ENCODE measurements at regions of chr3 and their contacts with region 1.

Region 1: DNA sequence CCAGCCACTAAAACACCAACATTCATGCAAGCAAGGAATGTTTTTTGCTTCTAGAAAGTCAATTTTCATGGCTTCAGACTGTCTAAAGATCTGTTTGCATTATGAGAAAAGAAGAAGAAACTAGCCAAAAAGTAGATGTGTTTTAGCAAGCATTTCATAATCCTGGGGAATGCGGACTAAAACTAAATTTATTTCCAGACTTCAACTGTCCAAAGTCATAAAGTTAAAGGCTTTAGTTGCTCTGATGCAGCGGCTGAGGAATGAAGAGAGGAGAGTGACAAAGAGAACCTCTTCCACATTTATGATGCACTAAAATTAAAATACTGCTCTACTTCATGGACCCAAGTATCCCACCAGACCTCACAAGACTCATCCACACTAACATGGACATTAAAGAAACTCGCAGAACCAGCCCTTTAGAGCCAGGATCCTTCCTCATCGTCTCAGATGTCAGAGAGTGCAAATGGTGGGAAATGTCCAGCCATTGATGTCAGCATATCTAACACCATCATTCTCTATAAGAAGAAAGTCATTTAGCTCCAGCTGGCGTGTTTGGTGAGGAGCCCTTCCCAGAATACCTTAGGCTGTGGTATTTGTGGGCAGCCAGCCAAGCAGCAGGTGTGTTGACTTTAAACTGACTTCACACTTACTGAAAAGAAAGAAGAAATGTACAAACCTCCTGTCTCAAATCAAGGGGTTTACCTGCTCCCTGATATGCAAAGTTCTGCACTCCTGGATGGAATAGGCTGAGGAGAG is 17.4 kb downstream of the FYCO1 start:
- DNase-seq: peak; percentile 38 to 73 (median 48)
- H3K4me3 ChIP-seq: peak overlapping the region in 1 of 2 donors; percentile 2
- H3K4me3 Mint-ChIP-seq: peak overlapping the region in 7 of 8 donors; percentile 38 to 93 (median 79)
- H3K27ac ChIP-seq: peak overlapping the region; percentile 10
- H3K27ac Mint-ChIP-seq: peak overlapping the region; percentile 31 to 99 (median 90)
- H3K4me1 ChIP-seq: peaks cover 91% of the 10 kb centered on the region
- H3K4me1 Mint-ChIP-seq: peaks cover 50 to 96% (median 74%) of the 10 kb centered on the region in 4 donors
- H3K27me3 ChIP-seq: no peaks in the 10 kb centered on the region
- H3K27me3 Mint-ChIP-seq: no peaks in the 10 kb centered on the region

Region 2: GRCh38 chr3:45958321-45958791 is 19.8 kb before region 1 on chr3:
- CTCF ChIA-PET with region 1: no interaction called
- POLR2A ChIA-PET with region 1: interaction called, 108 read pairs
- intact Hi-C with region 1: no loop called
- DNase-seq: no peak
- H3K4me3 ChIP-seq: no peak overlapping the region
- H3K4me3 Mint-ChIP-seq: peak overlapping the region in 1 of 8 donors; percentile 25
- H3K27ac ChIP-seq: peak overlapping the region; percentile 4
- H3K27ac Mint-ChIP-seq: peak overlapping the region in 4 of 7 donors; percentile 3 to 66 (median 26)
- H3K4me1 ChIP-seq: peaks cover 25% of the 10 kb centered on the region
- H3K4me1 Mint-ChIP-seq: peaks cover 8 to 55% (median 33%) of the 10 kb centered on the region in 4 donors
- H3K27me3 ChIP-seq: no peaks in the 10 kb centered on the region
- H3K27me3 Mint-ChIP-seq: no peaks in the 10 kb centered on the region

Region 3: DNA sequence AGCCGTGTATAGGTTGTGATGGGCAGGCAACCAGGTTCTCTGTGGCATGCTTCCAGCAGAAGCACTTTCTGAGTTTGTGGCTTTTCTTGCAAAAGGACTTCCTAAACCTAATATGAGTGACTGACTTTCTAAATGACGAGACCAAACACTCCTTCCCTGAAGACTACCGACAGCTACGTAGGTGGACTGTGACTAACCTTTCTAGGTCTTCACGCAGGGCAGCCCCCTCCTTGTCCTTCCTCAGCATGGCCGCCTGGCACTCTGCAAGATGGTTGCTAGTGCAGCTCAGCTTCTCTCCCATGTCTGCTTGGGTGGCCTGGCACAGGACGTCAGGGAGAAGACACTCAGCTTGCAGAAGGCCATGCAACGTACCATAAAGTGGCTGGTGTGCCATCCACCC is 14.0 kb before region 1 on chr3:
- CTCF ChIA-PET with region 1: interaction called, 38 read pairs
- POLR2A ChIA-PET with region 1: interaction called, 108 read pairs
- intact Hi-C with region 1: loop called (anchors 1 kb)
- DNase-seq: peak in 1 of 5 donors; percentile 60
- H3K4me3 ChIP-seq: no peak overlapping the region
- H3K4me3 Mint-ChIP-seq: peak overlapping the region in 6 of 8 donors; percentile 11 to 73 (median 38)
- H3K27ac ChIP-seq: peak overlapping the region; percentile 26
- H3K27ac Mint-ChIP-seq: peak overlapping the region; percentile 41 to 88 (median 75)
- H3K4me1 ChIP-seq: peaks cover 64% of the 10 kb centered on the region
- H3K4me1 Mint-ChIP-seq: peaks cover 35 to 81% (median 61%) of the 10 kb centered on the region in 4 donors
- H3K27me3 ChIP-seq: no peaks in the 10 kb centered on the region
- H3K27me3 Mint-ChIP-seq: no peaks in the 10 kb centered on the region

Region 4: GRCh38 chr3:46070595-46071093 is 92.5 kb after region 1 on chr3:
- CTCF ChIA-PET with region 1: interaction called, 65 read pairs
- POLR2A ChIA-PET with region 1: interaction called, 80 read pairs
- intact Hi-C with region 1: loop called (anchors 2 kb)
- DNase-seq: peak in 4 of 5 donors; percentile 47 to 56 (median 49)
- H3K4me3 ChIP-seq: no peak overlapping the region
- H3K4me3 Mint-ChIP-seq: peak overlapping the region in 6 of 8 donors; percentile 19 to 65 (median 51)
- H3K27ac ChIP-seq: peak overlapping the region; percentile 13
- H3K27ac Mint-ChIP-seq: peak overlapping the region; percentile 15 to 91 (median 73)
- H3K4me1 ChIP-seq: peaks cover 62% of the 10 kb centered on the region
- H3K4me1 Mint-ChIP-seq: peaks cover 52 to 68% (median 58%) of the 10 kb centered on the region in 4 donors
- H3K27me3 ChIP-seq: no peaks in the 10 kb centered on the region
- H3K27me3 Mint-ChIP-seq: no peaks in the 10 kb centered on the region